ENCODE measurements at regions of chr17 and their contacts with region 1.

Region 1: GRCh38 chr17:76737082-76737675 is at the start of gene SRSF2:
- DNase-seq: peak; percentile 100
- H3K4me3 Mint-ChIP-seq: peak within 1 kb of the TSS; percentile 92
- H3K27ac Mint-ChIP-seq: peak within 1 kb of the TSS; percentile 100
- H3K4me1 Mint-ChIP-seq: peaks cover 37% of the 10 kb centered on the region
- H3K27me3 Mint-ChIP-seq: no peaks in the 10 kb centered on the region
- total RNA-seq, gene SRSF2: 515 and 539 TPM in 2 replicates

Region 2: DNA sequence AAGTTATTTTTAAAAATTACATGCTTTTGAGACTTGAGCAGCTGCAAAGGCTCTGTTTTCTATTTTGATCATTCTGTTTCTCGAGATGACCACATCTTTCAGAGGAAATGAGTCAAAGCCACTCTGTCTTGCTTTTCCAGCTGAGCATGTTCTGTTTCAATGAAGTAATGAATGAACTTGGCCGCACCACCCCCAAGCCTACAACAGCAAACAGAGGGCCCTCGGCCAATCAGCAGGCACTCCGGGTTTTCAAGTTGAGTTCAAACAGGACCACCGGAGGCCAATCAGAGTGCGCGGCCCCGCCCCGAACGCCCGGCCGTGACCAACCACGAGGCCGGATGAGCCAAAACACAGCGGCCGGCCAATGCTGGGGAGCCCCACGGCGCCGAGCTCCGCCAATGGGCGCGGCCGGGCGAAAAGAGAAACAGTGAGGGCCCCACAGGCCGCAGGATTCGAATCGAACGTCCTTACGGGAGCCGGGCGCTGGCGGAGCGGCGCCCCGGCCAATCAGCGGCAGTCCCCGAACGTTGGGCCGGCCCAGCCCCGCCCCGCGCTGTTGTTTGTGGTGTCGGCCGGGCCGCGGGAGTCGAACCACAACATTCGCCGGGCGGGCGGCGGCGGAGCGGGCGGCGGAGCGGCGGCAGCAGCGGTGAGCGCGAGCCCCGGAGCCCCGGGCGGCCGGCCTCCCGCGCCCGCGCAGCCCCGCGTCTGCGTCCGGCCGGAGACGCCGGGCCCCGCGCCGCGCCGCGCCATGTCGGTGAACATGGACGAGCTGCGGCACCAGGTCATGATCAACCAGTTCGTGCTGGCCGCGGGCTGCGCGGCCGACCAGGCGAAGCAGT is 472.2 kb before region 1 on chr17 and contains the start of gene UBALD2:
- intact Hi-C with region 1: loop called (anchors 5 kb)
- DNase-seq: peak; percentile 100
- H3K4me3 Mint-ChIP-seq: peak within 1 kb of the TSS; percentile 94
- H3K27ac Mint-ChIP-seq: peak within 1 kb of the TSS; percentile 95
- H3K4me1 Mint-ChIP-seq: peaks cover 56% of the 10 kb centered on the region
- H3K27me3 Mint-ChIP-seq: no peaks in the 10 kb centered on the region
- total RNA-seq, gene UBALD2: 184 and 189 TPM in 2 replicates

Region 3: DNA sequence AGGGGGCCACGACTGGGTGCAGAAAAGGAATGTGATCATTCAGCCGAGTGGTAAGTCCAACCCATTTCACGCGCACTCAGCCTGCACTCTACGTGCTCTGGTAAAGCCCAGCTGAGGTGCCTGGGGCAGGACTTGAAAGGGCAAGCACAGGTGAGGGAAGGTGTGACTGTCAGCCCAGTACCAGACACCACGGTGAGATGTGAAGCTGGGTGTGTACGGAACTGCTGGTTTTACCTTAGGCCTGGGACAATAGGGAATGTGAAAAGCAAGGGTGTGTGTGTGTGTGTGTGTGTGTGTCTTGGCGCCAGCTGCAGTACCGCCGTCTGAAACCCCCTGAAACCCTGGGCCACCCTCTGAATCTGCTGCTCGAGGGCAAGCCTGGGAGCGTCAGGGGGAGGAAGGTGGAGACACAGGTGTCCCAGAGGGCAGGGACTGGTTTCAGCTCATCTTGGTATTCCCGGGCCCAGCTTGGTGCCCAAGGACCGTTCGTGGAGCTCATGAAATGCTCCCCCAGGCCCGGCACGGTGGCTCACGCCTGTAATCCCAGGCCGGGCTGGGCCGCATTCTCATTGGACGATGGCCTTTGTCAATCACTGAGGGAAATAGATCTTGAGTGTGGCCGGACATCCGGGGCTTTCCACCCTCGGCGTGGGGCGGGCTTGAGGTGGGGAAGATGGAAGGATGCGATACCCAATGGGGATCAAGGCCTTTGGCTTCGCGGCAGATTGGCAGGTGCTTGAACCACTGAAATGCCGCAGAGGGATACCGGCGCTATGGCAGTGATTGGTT is 65.9 kb before region 1 on chr17:
- intact Hi-C with region 1: loop called (anchors 5 kb)
- DNase-seq: peak; percentile 100
- H3K4me3 Mint-ChIP-seq: peak overlapping the region; percentile 96
- H3K27ac Mint-ChIP-seq: peak overlapping the region; percentile 94
- H3K4me1 Mint-ChIP-seq: peaks cover 25% of the 10 kb centered on the region
- H3K27me3 Mint-ChIP-seq: peaks cover 13% of the 10 kb centered on the region

Region 4: DNA sequence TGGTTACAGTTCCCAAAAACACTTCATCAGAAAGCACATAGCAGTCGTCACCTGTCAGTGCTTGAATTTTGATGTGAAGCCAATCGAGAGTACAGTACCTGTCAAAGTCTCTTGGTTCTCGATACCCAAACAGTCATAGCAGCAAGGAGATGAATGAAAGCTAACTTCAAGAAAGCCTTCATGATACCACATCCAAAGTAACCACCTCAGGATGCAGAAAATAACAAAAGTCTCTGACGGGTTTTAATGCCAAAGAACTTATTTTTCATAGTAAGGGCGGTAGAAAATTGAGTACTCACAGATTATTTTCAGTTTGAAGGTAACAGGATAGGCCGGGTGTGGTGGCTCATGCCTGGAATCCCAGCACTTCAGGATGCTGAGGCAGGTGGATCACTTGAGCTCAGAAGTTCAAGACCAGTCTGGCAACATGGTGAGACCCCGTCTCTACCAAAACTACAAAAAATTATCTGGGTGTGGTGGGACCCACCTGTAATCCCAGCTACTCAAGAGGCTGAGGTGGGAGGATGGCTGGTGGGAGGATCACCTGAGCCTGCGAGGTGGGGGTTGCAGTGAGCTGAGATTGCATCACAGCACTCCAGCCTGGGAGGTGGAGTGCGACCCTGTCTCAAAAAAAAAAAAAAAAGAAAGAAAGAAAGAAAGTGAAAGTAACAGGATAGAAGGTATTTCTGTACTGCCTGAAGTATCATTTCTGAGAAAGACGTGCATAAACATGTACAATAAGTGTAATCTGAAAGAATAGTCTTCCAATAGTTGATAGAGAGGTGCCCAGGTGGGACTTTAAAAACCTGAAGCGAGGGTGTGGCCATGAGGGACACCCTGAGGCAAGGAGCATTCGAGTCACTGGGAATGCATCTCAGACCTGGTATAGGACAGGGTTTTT is 16.1 kb after region 1 on chr17:
- intact Hi-C with region 1: loop called (anchors 2 kb)
- DNase-seq: peak; percentile 77
- H3K4me3 Mint-ChIP-seq: peak overlapping the region; percentile 89
- H3K27ac Mint-ChIP-seq: peak overlapping the region; percentile 92
- H3K4me1 Mint-ChIP-seq: peaks cover 23% of the 10 kb centered on the region
- H3K27me3 Mint-ChIP-seq: no peaks in the 10 kb centered on the region

Region 5: DNA sequence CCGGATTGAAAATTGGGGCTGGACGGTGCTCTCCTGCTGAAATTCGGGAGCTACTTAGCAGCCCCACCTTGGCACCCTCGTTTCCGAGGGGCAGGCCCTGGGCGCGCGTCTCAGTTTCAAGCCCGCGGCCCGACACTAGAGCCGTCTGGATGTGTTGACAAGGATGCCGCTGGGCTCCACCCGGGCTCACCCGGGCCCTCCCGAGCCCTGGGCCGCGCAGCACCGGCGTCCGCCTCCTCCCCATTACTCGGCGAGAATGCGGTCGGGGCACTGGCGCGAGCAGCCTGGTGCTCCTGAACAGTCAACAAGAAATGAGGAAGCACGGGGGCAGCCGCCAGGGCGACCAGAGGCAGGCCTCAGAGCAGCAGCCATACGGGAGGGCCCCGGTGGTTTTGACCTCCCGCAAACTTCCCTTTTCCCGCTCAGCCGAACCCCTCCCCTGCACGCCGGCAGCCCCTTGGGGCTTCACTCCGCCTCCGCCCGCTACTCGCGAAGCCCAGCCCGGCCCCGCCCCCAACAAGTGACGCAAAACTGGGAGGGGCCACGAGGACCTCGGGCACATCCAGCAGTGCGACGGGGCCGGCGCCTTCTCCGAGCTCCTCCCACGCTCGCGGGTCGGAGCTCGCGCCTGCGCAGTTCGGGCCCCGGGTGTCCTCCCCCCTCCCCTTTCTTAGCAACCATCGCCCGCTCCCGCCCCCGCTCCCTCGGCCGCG is 403.1 kb after region 1 on chr17:
- intact Hi-C with region 1: loop called (anchors 2 kb)
- DNase-seq: peak; percentile 100
- H3K4me3 Mint-ChIP-seq: peak overlapping the region; percentile 65
- H3K27ac Mint-ChIP-seq: peak overlapping the region; percentile 94
- H3K4me1 Mint-ChIP-seq: peaks cover 55% of the 10 kb centered on the region
- H3K27me3 Mint-ChIP-seq: no peaks in the 10 kb centered on the region

Measured in activated CD4-positive, alpha-beta T cell treated with anti-CD3 and anti-CD28 coated beads, Interleukin-2, amount 10 ng/mL, durations not matched to agents 24 days and 14 days (primary cell).